Motor neuron (in vitro differentiated cells): ENCODE measurements at regions of chr2 and their contacts with region 1.

Region 1: DNA sequence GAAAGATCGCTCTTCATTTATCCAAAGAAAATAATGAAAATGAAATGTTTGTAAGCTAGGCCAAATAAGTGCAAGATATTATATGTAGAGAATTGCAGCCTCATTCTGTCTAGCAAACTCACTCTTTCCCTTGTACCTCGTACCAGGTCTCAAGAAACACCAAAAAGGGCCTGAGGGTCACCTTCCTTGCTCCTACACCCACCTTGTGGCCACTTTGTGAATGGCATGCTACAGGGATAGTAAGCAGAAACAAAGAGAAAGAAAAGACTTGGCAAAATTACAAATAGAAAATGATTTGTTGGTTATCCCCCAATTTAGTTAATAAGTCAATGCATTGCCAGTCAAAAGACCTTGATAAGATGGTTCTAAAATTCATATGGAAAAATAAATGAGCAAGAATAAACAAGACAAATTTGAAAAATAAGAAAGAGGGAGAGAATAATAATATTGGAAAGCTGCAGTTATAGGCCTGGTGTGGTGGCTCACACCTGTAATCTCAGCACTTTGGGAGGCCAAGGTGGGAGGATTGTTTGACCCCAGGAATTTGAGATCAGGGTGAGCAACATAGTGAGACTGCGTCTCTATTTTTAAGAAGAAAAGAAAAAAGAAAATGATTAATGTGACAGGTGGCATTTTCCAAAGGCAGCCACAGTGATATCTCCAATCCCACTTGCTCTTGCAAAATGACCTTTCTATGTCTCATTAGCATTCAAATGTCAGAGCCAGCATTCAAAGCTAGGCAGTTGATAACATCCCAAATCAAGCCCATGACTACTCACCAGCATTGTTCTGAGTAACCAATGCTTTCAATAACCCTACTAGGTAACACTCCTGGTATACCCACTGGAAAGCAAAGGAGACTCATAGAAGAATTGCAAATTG is 38.8 kb upstream of the BMP10 start:
- ATAC-seq: peak in 4 of 8 experiments; percentile 13 to 61 (median 36)
- H3K4me3 ChIP-seq: no peak overlapping the region
- H3K27ac ChIP-seq: no peak overlapping the region
- H3K4me1 ChIP-seq: no peaks in the 10 kb centered on the region

Region 2: DNA sequence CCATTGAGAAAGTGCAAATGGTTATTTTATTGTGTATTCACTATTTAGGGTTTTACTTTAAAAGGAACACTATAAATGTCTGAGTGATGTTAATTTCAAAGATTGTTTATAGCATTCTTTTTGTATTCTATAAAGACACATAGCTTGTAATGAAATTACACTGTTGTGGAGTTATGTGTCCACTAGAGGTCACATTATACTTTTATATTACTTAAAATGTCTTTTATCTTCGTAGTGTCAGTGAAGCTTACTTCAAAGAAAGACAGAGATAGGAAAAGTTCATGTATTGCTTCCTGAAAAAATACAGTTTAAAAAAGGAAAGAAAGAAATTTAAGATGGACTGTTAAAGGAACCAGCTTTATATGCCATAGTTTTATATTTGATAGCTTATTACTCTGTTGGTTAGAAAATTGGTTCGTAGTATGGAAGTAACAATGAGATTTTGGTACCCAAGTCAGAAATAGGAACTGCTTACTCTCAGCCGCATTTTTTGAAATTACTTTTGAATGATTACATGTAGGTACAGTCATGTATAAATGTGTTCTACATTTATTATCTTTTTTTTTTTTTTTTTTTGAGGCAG is 422.2 kb before region 1 on chr2:
- in situ Hi-C with region 1: loop called in 4 of 9 experiments (anchors 25 kb)
- ATAC-seq: peak in 3 of 8 experiments; percentile 50 to 59 (median 54)
- H3K4me3 ChIP-seq: no peak overlapping the region
- H3K27ac ChIP-seq: no peak overlapping the region
- H3K4me1 ChIP-seq: no peaks in the 10 kb centered on the region

Region 3: GRCh38 chr2:68715353-68716041 is 194.5 kb before region 1 on chr2:
- in situ Hi-C with region 1: loop called in 1 of 9 experiments (anchors 25 kb)
- ATAC-seq: peak in 3 of 8 experiments; percentile 73 to 99 (median 80)
- H3K4me3 ChIP-seq: no peak overlapping the region
- H3K27ac ChIP-seq: no peak overlapping the region
- H3K4me1 ChIP-seq: no peaks in the 10 kb centered on the region

Region 4: GRCh38 chr2:68726608-68727367 is 183.2 kb before region 1 on chr2:
- in situ Hi-C with region 1: loop called in 4 of 9 experiments (anchors 25 kb)
- ATAC-seq: no peak
- H3K4me3 ChIP-seq: no peak overlapping the region
- H3K27ac ChIP-seq: no peak overlapping the region
- H3K4me1 ChIP-seq: no peaks in the 10 kb centered on the region

Region 5: GRCh38 chr2:68751397-68752339 is 158.4 kb before region 1 on chr2:
- in situ Hi-C with region 1: loop called in 5 of 9 experiments (anchors 10 to 25 kb)
- ATAC-seq: peak; percentile 72 to 100 (median 92)
- H3K4me3 ChIP-seq: no peak overlapping the region
- H3K27ac ChIP-seq: no peak overlapping the region
- H3K4me1 ChIP-seq: no peaks in the 10 kb centered on the region